Dendritic cell treated with granulocyte-macrophage colony-stimulating factor and Interleukin-4, amounts not matched to agents 40 ng/mL and 50 ng/mL, for 4 days (primary cell): ENCODE measurements at regions of chr9 and their contacts with region 1.

Region 1: GRCh38 chr9:37592108-37592951 is at the start of gene TOMM5:
- H3K4me3 Mint-ChIP-seq: peak within 1 kb of the TSS; percentile 99
- H3K27ac Mint-ChIP-seq: peak within 1 kb of the TSS; percentile 95
- H3K4me1 Mint-ChIP-seq: peaks cover 27% of the 10 kb centered on the region
- H3K27me3 Mint-ChIP-seq: peaks cover 8% of the 10 kb centered on the region

Region 2: DNA sequence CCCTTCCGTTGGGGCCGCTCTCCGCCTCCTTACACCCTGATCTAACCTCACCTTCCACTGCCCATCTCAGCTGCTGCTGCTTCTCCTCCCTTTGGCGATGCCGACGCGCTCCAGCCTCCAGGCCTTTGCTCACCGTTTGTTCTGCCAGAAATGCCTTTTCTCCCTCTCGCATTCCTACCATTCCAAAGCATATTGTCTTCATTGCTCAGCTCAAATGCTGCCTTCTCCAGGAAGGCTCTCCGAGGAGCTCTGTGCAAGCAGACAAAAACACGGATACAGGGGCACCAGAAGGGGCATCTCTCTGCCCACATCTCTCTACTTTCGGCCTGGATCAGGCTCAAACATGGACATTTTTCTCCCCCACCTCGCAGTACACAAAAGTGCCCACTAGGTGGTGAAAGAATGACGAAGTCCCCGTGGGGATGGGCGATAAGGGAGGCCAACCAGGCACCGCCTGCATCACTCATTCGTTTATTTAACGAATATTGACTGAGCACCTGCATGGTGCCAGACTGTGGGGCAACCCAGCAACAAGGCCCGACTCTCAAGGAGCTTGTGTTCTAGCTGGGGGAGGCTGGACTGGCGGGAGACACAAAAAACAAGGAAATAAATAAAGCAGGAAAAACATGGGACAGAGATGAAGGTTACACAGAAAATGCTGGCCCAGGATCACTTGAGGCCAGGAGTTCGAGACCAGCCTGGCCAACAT is 177.2 kb before region 1 on chr9:
- intact Hi-C with region 1: loop called (anchors 5 kb)
- H3K4me3 Mint-ChIP-seq: no peak overlapping the region
- H3K27ac Mint-ChIP-seq: peak overlapping the region; percentile 7
- H3K4me1 Mint-ChIP-seq: peaks cover 8% of the 10 kb centered on the region
- H3K27me3 Mint-ChIP-seq: peaks cover 5% of the 10 kb centered on the region